ENCODE measurements at regions of chr12 and their contacts with region 1.

Region 1: DNA sequence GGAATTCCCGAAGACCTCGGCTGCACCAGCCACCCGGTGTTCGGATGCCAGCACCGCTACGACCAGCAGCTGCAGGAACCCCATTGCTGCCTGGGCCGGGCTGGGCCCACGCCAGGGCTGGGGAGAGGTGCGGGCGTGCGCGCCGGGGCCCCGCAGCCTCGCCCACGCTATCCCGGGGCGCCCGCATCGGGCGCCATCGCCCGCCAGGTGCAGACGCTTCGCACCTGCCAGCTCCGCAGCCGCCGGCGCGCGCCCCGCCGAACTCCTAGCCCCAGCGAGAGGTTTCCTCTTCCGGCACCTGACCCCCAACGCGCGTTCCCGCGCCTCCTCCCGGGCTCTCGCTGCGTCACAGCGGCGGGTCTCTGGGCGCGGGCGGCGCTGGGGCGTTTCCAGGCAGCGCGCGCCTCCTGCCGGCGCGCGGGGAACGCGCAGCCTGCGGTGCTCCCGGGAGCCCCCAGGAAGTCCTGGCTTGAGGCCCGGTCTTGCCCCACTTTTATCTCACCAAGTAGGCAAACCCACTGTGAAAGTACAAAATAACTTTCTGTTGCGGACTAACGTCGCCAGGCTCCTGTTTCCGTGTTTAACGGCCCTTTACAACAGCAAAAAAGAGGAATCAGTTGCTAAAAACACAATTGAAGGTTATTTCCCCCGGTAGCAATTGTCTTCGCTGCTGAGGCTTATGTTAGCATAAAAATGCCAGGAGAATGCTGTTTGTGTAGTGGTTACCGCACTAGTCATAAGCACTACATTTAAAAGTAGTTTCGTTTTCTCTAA is at the start of gene TM7SF3:
- DNase-seq: peak; percentile 94 to 97 (median 97)
- H3K4me3 ChIP-seq: peak within 1 kb of the TSS; percentile 84 to 97 (median 93)
- H3K27ac ChIP-seq: peak within 1 kb of the TSS; percentile 91 to 95
- H3K4me1 ChIP-seq: peaks cover 26 to 92% (median 72%) of the 10 kb centered on the region in 4 experiments
- H3K27me3 ChIP-seq: no peaks in the 10 kb centered on the region

Region 2: DNA sequence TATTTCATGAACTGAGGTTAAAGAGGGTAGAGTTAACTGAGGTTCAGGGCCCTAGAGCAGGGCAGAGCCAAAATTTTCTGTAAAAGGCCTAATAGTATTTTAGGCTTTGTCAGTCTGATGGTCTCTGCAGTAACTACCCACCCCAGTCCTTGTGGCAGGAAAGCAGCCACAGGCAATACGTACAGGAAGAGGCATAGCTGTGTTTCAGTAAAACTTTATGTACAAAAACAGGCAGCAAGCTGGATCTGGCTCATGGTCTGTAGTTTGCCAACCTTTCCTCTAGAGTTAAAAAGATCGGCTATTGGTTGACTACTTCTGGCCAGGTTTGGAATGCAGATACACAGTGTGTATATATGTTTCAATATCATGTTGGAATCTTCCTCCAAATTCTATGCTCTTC is 17.3 kb before region 1 on chr12:
- CTCF ChIA-PET with region 1: interaction called, 62 read pairs
- POLR2A ChIA-PET with region 1: interaction called, 3 read pairs
- DNase-seq: peak; percentile 51 to 86 (median 78)
- H3K4me3 ChIP-seq: peak overlapping the region in 2 of 7 experiments; percentile 16 to 40
- H3K27ac ChIP-seq: peak overlapping the region; percentile 25 to 70
- H3K4me1 ChIP-seq: peaks cover 20 to 56% (median 36%) of the 10 kb centered on the region in 4 experiments
- H3K27me3 ChIP-seq: no peaks in the 10 kb centered on the region

Region 3: GRCh38 chr12:27003421-27004381 is 10.6 kb before region 1 on chr12:
- CTCF ChIA-PET with region 1: interaction called, 62 read pairs
- POLR2A ChIA-PET with region 1: interaction called, 3 read pairs
- DNase-seq: no peak
- H3K4me3 ChIP-seq: no peak overlapping the region
- H3K27ac ChIP-seq: peak overlapping the region in 1 of 2 experiments; percentile 18
- H3K4me1 ChIP-seq: peaks cover 23 to 78% (median 49%) of the 10 kb centered on the region in 4 experiments
- H3K27me3 ChIP-seq: no peaks in the 10 kb centered on the region

Region 4: DNA sequence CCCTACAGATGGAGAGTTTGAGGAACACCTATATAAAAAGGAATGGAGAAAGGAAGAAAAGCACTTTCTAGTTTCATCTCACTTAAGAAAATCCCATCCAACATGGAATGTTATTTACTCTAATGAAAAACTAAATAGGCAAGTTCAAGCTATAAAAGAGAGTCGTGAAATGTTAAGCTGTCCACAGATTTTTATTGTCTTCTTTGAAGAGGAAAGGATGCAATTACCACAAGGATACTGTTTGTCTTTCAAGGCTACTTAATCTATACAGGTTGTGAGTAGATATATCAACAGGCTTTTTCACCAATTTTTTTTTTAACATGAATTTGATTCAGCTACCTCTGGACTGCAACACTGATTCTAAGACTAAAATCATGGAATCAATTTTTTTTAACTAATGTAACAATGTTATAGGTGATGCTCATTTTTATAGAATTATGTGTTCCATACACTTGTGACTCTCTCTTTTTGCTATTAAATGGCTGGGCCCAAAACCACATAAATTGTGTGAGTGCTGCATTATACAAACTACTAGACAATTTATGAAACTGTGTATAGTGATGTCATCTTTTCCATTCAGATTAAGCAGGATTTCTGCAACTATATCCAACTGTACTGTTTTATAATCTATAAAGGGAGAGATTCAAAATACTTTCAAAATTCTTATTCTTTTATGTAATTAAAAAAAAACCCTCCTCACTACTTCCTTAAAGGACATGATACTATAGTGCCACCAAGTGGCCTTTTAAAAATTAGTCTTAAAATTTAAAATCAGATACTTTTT is 291.6 kb after region 1 on chr12:
- CTCF ChIA-PET with region 1: interaction called, 61 read pairs
- POLR2A ChIA-PET with region 1: interaction called, 3 read pairs
- DNase-seq: peak; percentile 64 to 83 (median 77)
- H3K4me3 ChIP-seq: no peak overlapping the region
- H3K27ac ChIP-seq: peak overlapping the region in 1 of 2 experiments; percentile 4
- H3K4me1 ChIP-seq: peaks cover 4 to 8% (median 4%) of the 10 kb centered on the region in 4 experiments
- H3K27me3 ChIP-seq: no peaks in the 10 kb centered on the region

Measured in common myeloid progenitor, CD34-positive (primary cell).